MCF 10A (cell line): ENCODE measurements at regions of chr1 and their contacts with region 1.

Region 1: GRCh38 chr1:221741711-221742554 is at the start of gene DUSP10:
- DNase-seq: peak; percentile 100
- H3K4me3 Mint-ChIP-seq: no peak within 1 kb of the TSS
- H3K27ac Mint-ChIP-seq: no peak within 1 kb of the TSS
- H3K4me1 Mint-ChIP-seq: peaks cover 25% of the 10 kb centered on the region
- H3K27me3 Mint-ChIP-seq: no peaks in the 10 kb centered on the region
- CTCF ChIP-seq: no peak
- total RNA-seq, gene DUSP10: 15.9 and 22.0 TPM in 2 replicates

Region 2: DNA sequence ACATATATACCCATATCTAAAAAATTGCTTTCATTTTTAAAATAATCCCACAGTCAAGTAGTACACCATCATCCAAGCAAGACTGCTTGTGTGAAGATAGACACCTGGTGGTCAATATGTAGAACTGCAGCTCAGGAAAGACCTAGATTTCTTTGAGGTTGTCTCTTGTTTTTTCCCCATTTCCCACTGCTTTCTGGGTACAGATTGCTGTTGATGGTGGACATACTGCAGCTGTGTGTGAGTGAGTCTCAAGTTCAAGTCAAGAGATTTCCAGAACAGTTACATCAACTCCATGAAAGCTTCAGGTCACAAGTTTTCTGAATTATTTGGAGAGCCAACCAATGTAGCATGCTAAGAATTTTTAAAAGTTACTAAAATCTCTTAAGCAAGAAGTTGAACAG is 306.4 kb before region 1 on chr1:
- CTCF ChIA-PET with region 1: no interaction called
- POLR2A ChIA-PET with region 1: interaction called, 4 read pairs
- intact Hi-C with region 1: loop called (anchors 1 kb)
- DNase-seq: peak; percentile 80
- H3K4me3 Mint-ChIP-seq: no peak overlapping the region
- H3K27ac Mint-ChIP-seq: no peak overlapping the region
- H3K4me1 Mint-ChIP-seq: peaks cover 26% of the 10 kb centered on the region
- H3K27me3 Mint-ChIP-seq: no peaks in the 10 kb centered on the region
- CTCF ChIP-seq: peak; percentile 99

Region 3: DNA sequence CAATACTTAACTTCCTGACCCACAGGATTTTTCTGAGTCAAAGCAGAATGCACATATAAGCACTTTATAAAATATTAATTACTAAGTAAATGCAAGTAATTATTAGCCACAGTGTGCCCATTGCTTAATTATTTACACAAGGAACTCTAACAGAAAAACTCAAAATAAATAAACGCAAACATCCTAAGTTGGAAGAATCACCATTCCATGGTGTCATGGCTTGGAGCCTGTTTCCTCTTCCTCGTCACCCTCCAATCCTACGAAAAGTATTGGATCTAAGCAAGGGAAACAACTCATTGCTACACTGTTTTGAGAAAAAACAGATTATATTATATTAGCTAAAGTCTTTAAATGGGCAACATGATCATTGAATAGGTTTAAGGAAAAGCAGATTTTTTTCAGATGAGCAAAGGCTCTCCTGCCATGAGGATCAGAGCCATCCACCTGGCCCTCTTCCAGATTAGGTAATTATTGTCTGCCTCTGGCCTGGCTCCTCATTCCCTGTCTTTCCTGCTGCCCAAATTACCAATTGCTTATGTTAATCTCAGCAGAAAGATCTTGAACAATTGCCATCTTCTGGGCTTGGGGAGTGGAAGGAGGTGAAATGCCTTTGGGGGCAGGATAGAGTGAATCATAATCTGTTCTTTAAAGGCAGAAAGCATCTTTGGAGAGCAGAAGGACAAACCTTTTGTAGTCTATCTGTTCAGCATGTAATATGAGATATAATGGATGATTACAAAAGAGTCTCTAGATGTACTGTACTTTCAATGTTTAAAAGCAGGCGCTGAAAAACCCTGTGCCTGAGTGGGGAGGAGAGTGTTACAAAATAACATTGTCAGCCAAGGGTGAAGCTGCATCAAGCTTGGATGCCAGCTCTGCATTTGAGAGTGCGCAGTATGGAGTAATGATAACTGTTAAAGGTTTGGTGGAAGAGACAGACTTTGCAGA is 121.2 kb before region 1 on chr1:
- CTCF ChIA-PET with region 1: interaction called, 4 read pairs
- POLR2A ChIA-PET with region 1: interaction called, 11 read pairs
- intact Hi-C with region 1: no loop called
- DNase-seq: peak; percentile 93
- H3K4me3 Mint-ChIP-seq: no peak overlapping the region
- H3K27ac Mint-ChIP-seq: peak overlapping the region; percentile 4
- H3K4me1 Mint-ChIP-seq: peaks cover 7% of the 10 kb centered on the region
- H3K27me3 Mint-ChIP-seq: no peaks in the 10 kb centered on the region
- CTCF ChIP-seq: no peak

Region 4: GRCh38 chr1:221768443-221769063 is 26.6 kb after region 1 on chr1:
- CTCF ChIA-PET with region 1: interaction called, 4 read pairs
- POLR2A ChIA-PET with region 1: interaction called, 16 read pairs
- intact Hi-C with region 1: no loop called
- DNase-seq: peak; percentile 30
- H3K4me3 Mint-ChIP-seq: no peak overlapping the region
- H3K27ac Mint-ChIP-seq: no peak overlapping the region
- H3K4me1 Mint-ChIP-seq: peaks cover 15% of the 10 kb centered on the region
- H3K27me3 Mint-ChIP-seq: no peaks in the 10 kb centered on the region
- CTCF ChIP-seq: no peak

Region 5: GRCh38 chr1:221868593-221869303 is 126.8 kb after region 1 on chr1:
- CTCF ChIA-PET with region 1: interaction called, 4 read pairs
- POLR2A ChIA-PET with region 1: interaction called, 25 read pairs
- intact Hi-C with region 1: no loop called
- DNase-seq: peak; percentile 83
- H3K4me3 Mint-ChIP-seq: no peak overlapping the region
- H3K27ac Mint-ChIP-seq: peak overlapping the region; percentile 26
- H3K4me1 Mint-ChIP-seq: peaks cover 25% of the 10 kb centered on the region
- H3K27me3 Mint-ChIP-seq: no peaks in the 10 kb centered on the region
- CTCF ChIP-seq: no peak

Region 6: DNA sequence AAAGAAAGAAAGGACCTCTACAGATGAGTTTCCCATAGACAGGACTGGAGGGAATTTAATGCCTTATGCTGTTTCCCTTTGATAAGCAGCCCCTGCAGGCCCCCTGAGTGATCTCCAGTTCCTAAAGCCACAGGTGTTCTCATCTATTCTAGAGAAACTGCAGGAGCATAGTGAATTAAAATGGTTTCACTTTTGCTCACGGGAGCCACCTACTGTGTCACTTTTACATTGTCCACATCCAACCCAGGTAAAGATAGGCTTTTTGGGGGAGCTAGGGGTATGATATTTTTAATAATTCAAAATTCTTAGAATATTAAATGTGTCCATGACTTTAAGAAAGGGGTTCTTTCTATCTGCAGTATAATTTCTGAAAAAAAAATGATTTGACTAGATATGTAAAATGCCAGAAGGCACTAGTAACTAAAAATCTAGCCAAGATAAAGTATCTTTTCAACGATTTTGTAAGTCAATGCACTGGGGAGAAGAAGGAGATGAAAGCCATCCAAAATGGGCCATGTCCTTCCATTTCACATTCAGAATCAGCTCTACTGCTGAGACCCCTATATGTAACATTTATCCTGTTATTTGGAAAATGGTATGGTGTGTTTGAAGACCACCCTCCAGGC is 267.3 kb after region 1 on chr1:
- CTCF ChIA-PET with region 1: interaction called, 70 read pairs
- POLR2A ChIA-PET with region 1: interaction called, 40 read pairs
- intact Hi-C with region 1: loop called (anchors 1 kb)
- DNase-seq: peak; percentile 77
- H3K4me3 Mint-ChIP-seq: no peak overlapping the region
- H3K27ac Mint-ChIP-seq: peak overlapping the region; percentile 24
- H3K4me1 Mint-ChIP-seq: no peaks in the 10 kb centered on the region
- H3K27me3 Mint-ChIP-seq: no peaks in the 10 kb centered on the region
- CTCF ChIP-seq: peak; percentile 86